ENCODE measurements at regions of chr13 and their contacts with region 1.

Region 1: GRCh38 chr13:110819203-110820014 is 95.5 kb downstream of the ANKRD10 start:
- DNase-seq: peak; percentile 22 to 86 (median 66)
- ATAC-seq: peak; percentile 74 to 85 (median 80)
- H3K4me3 ChIP-seq: no peak overlapping the region
- H3K4me3 Mint-ChIP-seq: no peak overlapping the region
- H3K27ac ChIP-seq: no peak overlapping the region
- H3K27ac Mint-ChIP-seq: no peak overlapping the region
- H3K4me1 ChIP-seq: peaks cover 0 to 9% of the 10 kb centered on the region in 2 experiments
- H3K4me1 Mint-ChIP-seq: peaks cover 4 to 12% (median 6%) of the 10 kb centered on the region in 3 donors
- H3K27me3 ChIP-seq: peaks cover 0 to 15% of the 10 kb centered on the region in 2 experiments
- H3K27me3 Mint-ChIP-seq: peaks cover 0 to 4% of the 10 kb centered on the region in 2 donors

Region 2: DNA sequence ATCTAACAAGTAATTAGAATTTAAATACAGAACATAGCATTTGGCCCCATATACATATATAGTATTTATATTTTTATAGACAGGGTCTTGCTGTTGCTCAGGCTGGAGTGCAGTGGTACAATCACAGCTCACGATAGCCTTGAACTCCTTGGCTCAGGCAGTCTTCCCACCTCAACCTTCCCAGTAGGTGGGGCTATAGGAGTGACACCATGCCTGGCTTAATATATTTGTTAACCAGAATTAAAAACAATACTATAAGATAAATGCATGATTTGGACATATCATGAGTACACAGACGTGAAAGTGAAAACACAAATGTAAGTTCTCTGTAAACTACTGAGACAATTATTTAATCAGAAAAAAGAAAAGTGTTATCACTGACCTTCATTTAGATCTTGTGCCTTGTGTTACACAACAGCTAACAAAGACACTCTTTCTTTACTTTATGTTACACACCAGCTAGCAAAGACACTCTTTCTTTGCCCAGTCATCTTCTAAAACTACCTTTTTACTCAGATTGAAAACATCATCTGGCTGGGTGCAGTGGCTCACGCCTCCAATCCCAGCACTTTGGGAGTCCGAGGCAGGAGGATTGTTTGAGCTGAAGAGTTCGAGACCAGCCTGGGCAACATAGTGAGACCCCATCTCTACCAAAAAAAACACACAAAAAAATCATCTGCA is 136.1 kb before region 1 on chr13:
- CTCF ChIA-PET with region 1: interaction called, 5 to 17 read pairs
- POLR2A ChIA-PET with region 1: no interaction called
- DNase-seq: peak in 8 of 35 experiments; percentile 13 to 47 (median 22)
- ATAC-seq: peak in 3 of 4 experiments; percentile 67 to 71 (median 70)
- H3K4me3 ChIP-seq: no peak overlapping the region
- H3K4me3 Mint-ChIP-seq: no peak overlapping the region
- H3K27ac ChIP-seq: no peak overlapping the region
- H3K27ac Mint-ChIP-seq: no peak overlapping the region
- H3K4me1 ChIP-seq: no peaks in the 10 kb centered on the region
- H3K4me1 Mint-ChIP-seq: peaks cover 0 to 3% (median 1%) of the 10 kb centered on the region in 3 donors
- H3K27me3 ChIP-seq: no peaks in the 10 kb centered on the region
- H3K27me3 Mint-ChIP-seq: no peaks in the 10 kb centered on the region

Region 3: GRCh38 chr13:110715395-110716235 is 103.8 kb before region 1 on chr13:
- CTCF ChIA-PET with region 1: interaction called in 1 of 2 experiments, 11 read pairs
- POLR2A ChIA-PET with region 1: no interaction called
- DNase-seq: peak; percentile 86 to 99 (median 97)
- ATAC-seq: peak; percentile 58 to 64 (median 63)
- H3K4me3 ChIP-seq: peak overlapping the region; percentile 99 to 100
- H3K4me3 Mint-ChIP-seq: peak overlapping the region; percentile 98
- H3K27ac ChIP-seq: peak overlapping the region; percentile 49
- H3K27ac Mint-ChIP-seq: peak overlapping the region; percentile 98
- H3K4me1 ChIP-seq: peaks cover 10 to 38% of the 10 kb centered on the region in 2 experiments
- H3K4me1 Mint-ChIP-seq: peaks cover 40 to 43% (median 42%) of the 10 kb centered on the region in 3 donors
- H3K27me3 ChIP-seq: no peaks in the 10 kb centered on the region
- H3K27me3 Mint-ChIP-seq: no peaks in the 10 kb centered on the region

Region 4: DNA sequence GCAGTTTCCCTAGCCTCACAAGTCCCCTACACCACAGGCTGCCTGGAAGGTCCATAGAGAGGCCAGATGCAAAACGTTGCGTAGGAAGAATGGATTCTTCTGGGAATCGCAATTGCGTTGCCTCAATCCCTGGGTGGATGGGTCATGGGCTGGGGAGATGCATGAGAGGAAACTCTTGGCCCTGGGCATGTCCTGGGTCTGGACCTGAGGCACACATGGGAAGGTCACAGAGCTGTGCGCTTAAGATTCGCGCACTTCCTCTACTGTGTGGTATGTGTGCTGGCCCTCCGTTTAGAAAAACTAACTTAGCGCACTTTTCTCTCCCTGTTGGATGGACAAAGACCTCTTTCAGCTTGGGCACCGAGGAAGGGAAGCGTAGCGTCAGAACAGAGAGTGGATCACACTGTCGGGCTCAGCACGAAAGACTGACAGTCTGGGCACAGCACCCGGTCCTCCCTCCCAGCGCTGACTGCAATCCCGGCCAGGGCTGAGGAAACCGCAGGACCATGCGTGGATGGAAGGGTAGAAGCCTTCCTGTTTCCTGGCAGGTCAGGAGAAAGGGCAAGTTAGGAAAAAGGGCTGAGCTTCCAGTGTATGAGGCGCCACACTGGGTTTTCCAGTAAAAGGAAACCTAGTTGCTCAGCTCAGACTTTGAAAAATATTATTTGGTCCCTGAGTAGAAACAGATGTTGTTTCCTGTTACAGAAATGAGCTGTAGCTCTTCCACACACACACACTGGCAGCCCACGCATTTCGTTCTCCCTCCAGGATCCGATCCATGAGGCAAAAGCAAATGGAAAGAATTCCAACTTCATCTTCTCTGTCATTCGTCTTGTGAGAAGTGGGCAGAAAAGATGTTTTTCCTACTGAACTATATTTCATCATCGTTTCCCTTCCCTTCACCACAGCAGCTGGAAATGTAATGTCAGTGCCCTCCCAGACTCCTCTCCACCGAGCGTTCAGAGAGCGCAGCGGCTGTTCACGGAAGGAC is 19.9 kb before region 1 on chr13:
- CTCF ChIA-PET with region 1: no interaction called
- POLR2A ChIA-PET with region 1: no interaction called
- DNase-seq: no peak
- ATAC-seq: no peak
- H3K4me3 ChIP-seq: no peak overlapping the region
- H3K4me3 Mint-ChIP-seq: peak overlapping the region in 1 of 3 donors; percentile 41
- H3K27ac ChIP-seq: no peak overlapping the region
- H3K27ac Mint-ChIP-seq: no peak overlapping the region
- H3K4me1 ChIP-seq: peaks cover 0 to 2% of the 10 kb centered on the region in 2 experiments
- H3K4me1 Mint-ChIP-seq: peaks cover 6 to 14% (median 7%) of the 10 kb centered on the region in 3 donors
- H3K27me3 ChIP-seq: peaks cover 4 to 48% of the 10 kb centered on the region in 2 experiments
- H3K27me3 Mint-ChIP-seq: peaks cover 47 to 63% of the 10 kb centered on the region in 2 donors